ENCODE measurements at regions of chr7 and their contacts with region 1.

Region 1: GRCh38 chr7:129315960-129316359 is 91.1 kb downstream of the AHCYL2 start:
- DNase-seq: peak; percentile 27 to 44
- ATAC-seq: peak; percentile 61 to 97 (median 94)
- H3K4me3 ChIP-seq: no peak overlapping the region
- H3K27ac ChIP-seq: peak overlapping the region in 9 of 10 donors; percentile 26 to 80 (median 70)
- H3K4me1 ChIP-seq: peaks cover 0 to 18% (median 7%) of the 10 kb centered on the region in 9 donors
- H3K27me3 ChIP-seq: no peaks in the 10 kb centered on the region
- CTCF ChIP-seq: no peak

Region 2: DNA sequence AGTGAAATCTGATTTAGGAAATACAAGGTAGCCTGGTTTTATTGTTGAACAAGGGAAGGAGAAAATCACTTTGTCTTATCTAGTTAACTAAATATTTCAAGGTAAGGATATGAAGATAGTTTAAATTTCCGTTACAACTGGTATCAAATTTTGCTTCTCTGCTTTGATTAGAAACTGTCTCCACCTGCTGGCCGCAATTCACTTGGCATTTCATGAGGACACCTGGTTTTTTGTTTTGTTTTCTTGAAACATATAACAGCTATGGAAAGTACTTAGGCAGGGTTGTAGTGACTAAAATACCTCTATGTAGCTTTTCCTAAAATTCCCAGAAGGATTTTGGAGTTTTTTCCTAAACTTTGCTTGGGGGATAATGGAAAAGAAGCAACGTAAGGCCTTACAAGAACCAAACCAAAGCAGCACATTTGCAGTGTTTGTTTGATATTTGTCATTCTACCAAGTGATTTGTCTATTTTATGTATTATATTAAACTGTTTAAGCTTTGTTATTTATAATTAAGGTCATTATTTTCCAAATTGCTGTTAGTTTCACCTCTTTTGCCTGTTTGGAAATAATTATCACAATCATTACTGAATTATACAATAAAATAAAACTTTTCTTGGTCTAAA is 17.6 kb before region 1 on chr7:
- intact Hi-C with region 1: loop called in 1 of 10 experiments (anchors 1 kb)
- DNase-seq: peak; percentile 21 to 34
- ATAC-seq: no peak
- H3K4me3 ChIP-seq: no peak overlapping the region
- H3K27ac ChIP-seq: no peak overlapping the region
- H3K4me1 ChIP-seq: peaks cover 0 to 12% (median 8%) of the 10 kb centered on the region in 9 donors
- H3K27me3 ChIP-seq: no peaks in the 10 kb centered on the region
- CTCF ChIP-seq: peak; percentile 29 to 81 (median 73)

Region 3: GRCh38 chr7:129401967-129402860 is 86.3 kb after region 1 on chr7:
- intact Hi-C with region 1: no loop called
- DNase-seq: no peak
- ATAC-seq: peak in 1 of 8 donors; percentile 42
- H3K4me3 ChIP-seq: no peak overlapping the region
- H3K27ac ChIP-seq: no peak overlapping the region
- H3K4me1 ChIP-seq: peaks cover 0 to 12% (median 3%) of the 10 kb centered on the region in 9 donors
- H3K27me3 ChIP-seq: no peaks in the 10 kb centered on the region
- CTCF ChIP-seq: peak in 3 of 9 donors; percentile 10 to 25 (median 20)

Region 4: DNA sequence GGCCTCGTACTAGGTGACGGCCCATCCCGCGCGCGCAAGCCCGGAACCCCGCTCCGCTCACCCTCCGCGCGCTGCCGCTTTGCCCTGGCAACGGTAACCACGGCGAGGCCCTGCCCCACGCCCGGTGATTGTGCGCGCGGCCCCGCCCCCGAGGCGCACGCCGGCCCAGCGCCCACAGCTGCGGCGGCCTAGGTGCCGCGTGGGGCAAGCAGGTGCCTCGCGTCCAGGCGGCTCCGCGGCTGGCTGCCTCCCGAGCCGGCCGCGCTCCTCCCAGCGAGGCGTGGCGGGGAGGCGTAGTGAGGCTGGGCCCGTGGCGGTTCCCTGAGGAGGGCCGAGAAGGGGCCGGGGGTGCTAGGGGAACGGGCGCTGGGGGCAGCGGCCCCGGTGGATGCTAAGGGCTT is 186.4 kb after region 1 on chr7 and contains the start of gene SMKR1:
- intact Hi-C with region 1: no loop called
- DNase-seq: peak; percentile 59 to 74
- ATAC-seq: peak; percentile 81 to 93 (median 88)
- H3K4me3 ChIP-seq: peak within 1 kb of the TSS; percentile 28 to 63 (median 56)
- H3K27ac ChIP-seq: no peak within 1 kb of the TSS
- H3K4me1 ChIP-seq: peaks cover 5 to 12% (median 8%) of the 10 kb centered on the region in 9 donors
- H3K27me3 ChIP-seq: peaks cover 0 to 30% (median 9%) of the 10 kb centered on the region in 7 donors
- CTCF ChIP-seq: no peak
- total RNA-seq, gene SMKR1: not detected